ENCODE measurements at regions of chr2 and their contacts with region 1.

Region 1: GRCh38 chr2:70871398-70872211 is 36.0 kb upstream of the CD207 start:
- H3K4me3 ChIP-seq: peak overlapping the region; percentile 19
- H3K27ac ChIP-seq: no peak overlapping the region
- H3K4me1 ChIP-seq: no peaks in the 10 kb centered on the region; the same call in 1 of the 2 replicates
- CTCF ChIP-seq: peak; percentile 98

Region 2: GRCh38 chr2:70887550-70888246 is 16.1 kb after region 1 on chr2:
- CTCF ChIA-PET with region 1: interaction called, 13 read pairs
- POLR2A ChIA-PET with region 1: no interaction called
- H3K4me3 ChIP-seq: peak overlapping the region; percentile 33
- H3K27ac ChIP-seq: peak overlapping the region; percentile 11; the same call in 1 of the 2 replicates
- H3K4me1 ChIP-seq: no peaks in the 10 kb centered on the region; the same call in 1 of the 2 replicates
- CTCF ChIP-seq: no peak

Region 3: GRCh38 chr2:70919672-70920366 is 48.2 kb after region 1 on chr2:
- CTCF ChIA-PET with region 1: interaction called, 144 read pairs
- POLR2A ChIA-PET with region 1: no interaction called
- H3K4me3 ChIP-seq: no peak overlapping the region
- H3K27ac ChIP-seq: no peak overlapping the region
- H3K4me1 ChIP-seq: peaks cover 3% of the 10 kb centered on the region; the same call in 1 of the 2 replicates
- CTCF ChIP-seq: peak; percentile 71; the same call in 1 of the 2 replicates

Region 4: GRCh38 chr2:70948337-70949003 is 76.9 kb after region 1 on chr2:
- CTCF ChIA-PET with region 1: interaction called, 180 read pairs
- POLR2A ChIA-PET with region 1: no interaction called
- H3K4me3 ChIP-seq: peak overlapping the region; percentile 26
- H3K27ac ChIP-seq: no peak overlapping the region
- H3K4me1 ChIP-seq: peaks cover 2% of the 10 kb centered on the region; the same call in 1 of the 2 replicates
- CTCF ChIP-seq: peak; percentile 93

Measured in HEK293 (cell line).